ENCODE measurements at regions of chr1 and their contacts with region 1.

Region 1: DNA sequence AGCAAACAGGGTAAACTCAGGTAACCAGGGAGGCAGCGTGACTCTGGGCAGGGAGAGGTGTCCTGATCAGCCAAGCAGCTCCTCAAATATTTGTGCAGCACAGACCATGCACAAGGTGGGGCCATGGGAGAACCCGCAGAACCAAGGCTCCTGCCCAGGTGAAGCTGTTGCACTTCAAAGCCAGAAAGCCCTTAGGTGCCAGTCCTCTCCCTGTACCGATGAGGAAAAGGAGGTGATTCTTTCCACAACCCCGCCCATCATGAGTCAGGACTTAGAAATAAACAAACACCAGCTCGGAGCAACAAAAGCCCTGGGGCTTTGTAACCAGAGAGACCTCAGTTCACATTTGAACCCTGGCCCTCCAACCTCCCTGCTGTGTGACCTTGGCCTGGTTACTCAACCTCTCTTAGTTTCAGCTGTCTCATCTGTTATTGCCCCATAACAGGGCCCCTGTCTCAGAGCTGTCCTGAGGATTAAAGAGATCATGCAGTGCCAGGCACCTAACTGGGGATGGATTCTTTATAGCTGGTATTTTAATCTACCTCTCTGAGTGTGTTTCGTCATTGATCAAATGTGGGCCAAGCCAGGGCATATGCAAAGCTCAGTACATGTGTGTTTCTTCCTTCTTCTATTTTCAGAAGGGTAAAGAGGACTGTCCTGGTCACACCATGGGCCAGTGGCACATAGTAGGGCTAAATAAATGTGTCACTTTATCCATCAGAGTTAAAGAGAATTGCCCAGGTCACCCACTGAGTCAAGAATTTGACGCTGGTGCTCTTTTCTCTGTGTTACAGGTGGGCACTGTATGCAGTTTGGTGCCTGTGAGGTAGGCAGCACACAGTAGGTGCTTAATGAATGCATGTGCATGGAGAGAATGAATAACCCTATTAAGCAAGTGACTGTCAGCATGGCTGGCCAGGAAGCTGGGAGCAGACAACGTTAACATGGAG is 1.4 kb downstream of the LDLRAD1 start:
- DNase-seq: peak; percentile 91 to 98
- H3K4me3 ChIP-seq: no peak overlapping the region
- H3K27ac ChIP-seq: peak overlapping the region; percentile 75
- H3K4me1 ChIP-seq: peaks cover 38% of the 10 kb centered on the region
- H3K27me3 ChIP-seq: no peaks in the 10 kb centered on the region; the same call in 1 of the 2 replicates
- CTCF ChIP-seq: no peak

Region 2: GRCh38 chr1:53736290-53736689 is 280.3 kb before region 1 on chr1:
- CTCF ChIA-PET with region 1: no interaction called
- POLR2A ChIA-PET with region 1: interaction called, 37 read pairs
- intact Hi-C with region 1: no loop called
- DNase-seq: no peak
- H3K4me3 ChIP-seq: no peak overlapping the region
- H3K27ac ChIP-seq: no peak overlapping the region
- H3K4me1 ChIP-seq: no peaks in the 10 kb centered on the region
- H3K27me3 ChIP-seq: peaks cover 58% of the 10 kb centered on the region
- CTCF ChIP-seq: no peak

Region 3: DNA sequence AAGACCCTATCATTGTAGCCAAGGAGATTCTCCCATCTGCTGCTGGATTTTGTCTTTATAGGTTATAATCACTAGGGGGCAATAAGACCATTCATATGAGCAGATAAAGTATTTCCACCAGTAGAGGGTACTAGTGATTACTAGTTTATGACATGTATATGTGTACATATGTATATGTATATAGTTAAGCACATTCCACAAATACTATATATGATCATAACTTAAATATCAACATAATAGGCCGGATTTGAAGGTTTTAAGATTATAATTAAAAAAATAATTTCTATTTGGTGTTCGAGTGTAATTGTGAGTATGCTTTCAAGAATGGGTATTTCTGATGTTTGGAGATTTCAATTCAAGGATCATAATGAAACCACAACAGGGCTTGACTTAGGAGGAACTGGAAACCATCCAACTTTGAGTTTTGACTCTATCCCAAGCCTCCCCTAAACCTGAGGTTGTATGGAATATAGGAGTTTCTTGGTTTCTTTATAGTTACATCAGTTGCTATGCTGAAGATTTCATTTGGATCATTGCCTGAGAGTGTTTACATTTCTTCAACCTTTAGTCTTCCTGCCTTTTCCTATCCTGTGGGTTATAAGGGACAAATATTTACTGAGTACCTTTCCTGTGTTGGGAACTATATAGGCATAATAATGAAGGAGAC is 53.7 kb after region 1 on chr1:
- CTCF ChIA-PET with region 1: no interaction called
- POLR2A ChIA-PET with region 1: no interaction called
- intact Hi-C with region 1: no loop called
- DNase-seq: peak in 1 of 2 experiments; percentile 55
- H3K4me3 ChIP-seq: no peak overlapping the region
- H3K27ac ChIP-seq: no peak overlapping the region
- H3K4me1 ChIP-seq: no peaks in the 10 kb centered on the region
- H3K27me3 ChIP-seq: no peaks in the 10 kb centered on the region
- CTCF ChIP-seq: peak; percentile 77

Region 4: DNA sequence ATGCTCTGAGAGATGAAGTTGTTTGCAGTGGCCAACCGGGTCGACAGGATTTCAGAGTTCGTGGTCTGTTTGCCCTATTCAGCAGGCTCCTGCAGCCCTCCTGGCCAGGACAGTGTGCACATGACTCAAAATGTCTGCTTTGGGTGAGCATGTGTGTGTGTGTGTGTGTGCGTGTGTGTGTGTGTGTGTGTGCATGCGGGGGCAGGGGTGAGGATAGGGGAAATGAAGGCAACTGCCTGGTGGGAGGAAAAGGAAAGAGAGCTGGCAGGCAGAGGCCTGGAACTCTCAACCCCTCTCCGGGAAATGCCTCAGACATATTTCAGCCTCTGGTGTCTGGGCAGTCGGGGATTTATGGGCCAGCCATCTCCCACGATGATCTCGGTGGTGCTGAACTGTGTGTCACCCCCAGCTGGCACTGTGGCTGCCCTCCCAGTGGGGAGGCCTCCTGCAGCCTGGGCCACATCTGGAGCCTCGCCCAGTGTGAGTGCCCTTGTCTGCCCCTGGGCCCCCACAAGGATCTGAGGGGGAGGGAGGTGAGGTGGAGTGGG is 121.0 kb after region 1 on chr1:
- CTCF ChIA-PET with region 1: no interaction called
- POLR2A ChIA-PET with region 1: no interaction called
- intact Hi-C with region 1: no loop called
- DNase-seq: no peak
- H3K4me3 ChIP-seq: no peak overlapping the region
- H3K27ac ChIP-seq: no peak overlapping the region
- H3K4me1 ChIP-seq: no peaks in the 10 kb centered on the region
- H3K27me3 ChIP-seq: no peaks in the 10 kb centered on the region
- CTCF ChIP-seq: no peak

Measured in PC-9 (cell line).